RWPE1 (cell line): ENCODE measurements at regions of chr10 and their contacts with region 1.

Region 1: GRCh38 chr10:128069351-128070051 is 56.7 kb downstream of the MKI67 start:
- DNase-seq: peak; percentile 83
- H3K27ac ChIP-seq: peak overlapping the region; percentile 100
- CTCF ChIP-seq: peak; percentile 79

Region 2: DNA sequence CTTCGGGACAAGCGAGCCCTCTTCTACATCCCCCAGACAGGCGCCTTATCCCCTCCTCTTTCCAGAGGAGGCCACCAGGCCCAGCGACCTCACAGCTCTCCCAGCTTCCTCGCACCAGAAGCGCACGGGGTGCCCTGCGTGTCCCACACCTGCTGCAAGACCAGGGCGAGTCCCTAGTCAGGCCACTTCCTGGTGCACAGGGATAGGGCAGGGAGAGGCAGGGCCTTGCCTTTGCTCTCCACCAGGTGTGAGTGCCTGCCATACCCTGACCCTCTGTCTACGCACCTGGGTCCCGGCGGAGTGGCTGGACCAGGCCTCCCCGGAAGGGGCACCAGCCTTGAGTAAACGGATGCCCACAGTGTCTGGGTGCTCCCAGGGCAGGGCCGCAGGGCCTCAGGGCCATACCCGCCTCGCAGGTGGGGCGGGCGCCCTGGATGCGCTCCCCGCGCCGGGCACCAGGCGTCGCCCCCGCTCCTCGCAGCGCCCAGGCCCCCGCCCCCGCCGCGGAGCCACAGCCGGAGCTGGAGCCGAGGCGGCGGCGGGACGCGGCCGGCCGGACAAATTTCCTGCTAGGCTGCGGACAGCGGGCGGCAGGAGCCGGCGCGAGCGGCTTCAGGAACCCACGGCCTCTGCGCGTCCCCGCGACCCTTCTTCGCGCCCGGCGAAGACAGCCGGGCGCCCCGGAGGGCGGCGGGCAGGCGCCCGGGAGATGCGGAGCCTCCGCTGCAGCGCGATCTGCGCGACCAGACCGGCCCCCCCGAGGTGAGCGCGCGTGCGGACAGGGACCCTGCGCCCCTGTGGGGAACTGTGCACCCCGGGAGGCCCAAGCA is 162.7 kb before region 1 on chr10 and contains the start of gene PTPRE:
- CTCF ChIA-PET with region 1: interaction called, 33 read pairs
- POLR2A ChIA-PET with region 1: no interaction called
- DNase-seq: peak; percentile 89
- H3K27ac ChIP-seq: peak within 1 kb of the TSS; percentile 74
- CTCF ChIP-seq: peak; percentile 98

Region 3: GRCh38 chr10:128035557-128035973 is 33.9 kb before region 1 on chr10:
- CTCF ChIA-PET with region 1: interaction called, 19 read pairs
- POLR2A ChIA-PET with region 1: no interaction called
- DNase-seq: no peak
- H3K27ac ChIP-seq: no peak overlapping the region; the same call in 1 of the 2 replicates
- CTCF ChIP-seq: no peak; the same call in 1 of the 2 replicates

Region 4: GRCh38 chr10:128047351-128047750 is 22.1 kb before region 1 on chr10:
- CTCF ChIA-PET with region 1: interaction called, 26 read pairs
- POLR2A ChIA-PET with region 1: interaction called, 3 read pairs
- DNase-seq: peak; percentile 98
- H3K27ac ChIP-seq: peak overlapping the region; percentile 95
- CTCF ChIP-seq: no peak